CD8-positive, alpha-beta T cell (primary cell): ENCODE measurements at regions of chr5 and their contacts with region 1.

Region 1: DNA sequence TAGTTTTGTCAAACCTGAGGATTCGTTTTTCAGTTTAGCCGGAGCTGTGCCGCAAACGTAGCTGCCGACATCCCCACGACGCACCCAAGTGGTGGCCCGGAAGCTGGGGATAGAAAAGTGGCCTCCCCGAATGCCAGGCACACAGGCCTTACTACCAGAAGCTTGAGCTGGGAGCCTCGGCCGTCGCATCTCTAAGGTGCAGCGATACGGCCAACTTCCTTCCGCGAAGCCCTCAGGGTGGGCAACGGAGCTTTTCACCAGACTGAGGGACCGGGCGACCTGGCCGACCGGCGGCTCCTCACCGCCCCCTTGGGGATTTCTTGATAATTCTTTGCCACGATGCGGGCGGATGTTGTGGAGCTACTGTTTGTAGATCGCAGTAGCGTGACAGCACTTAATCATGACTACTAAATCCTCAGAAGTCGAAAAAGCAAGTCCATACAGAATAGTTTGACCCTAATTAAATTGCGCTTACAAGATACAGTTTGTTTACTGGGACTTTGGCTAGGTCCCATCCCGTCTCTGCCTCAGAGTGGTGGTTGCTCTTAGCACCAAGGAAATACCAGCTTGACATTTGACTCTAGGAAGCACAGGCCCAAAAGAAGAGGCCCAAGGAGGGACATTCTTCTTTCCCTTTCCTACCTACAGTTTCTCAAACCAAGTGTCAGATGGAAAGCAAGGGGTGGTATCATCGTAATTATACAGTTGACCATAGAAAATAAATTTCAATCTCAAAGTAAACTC is 613 bp upstream of the TMEM267 start:
- DNase-seq: peak; percentile 72 to 92 (median 86)
- ATAC-seq: peak; percentile 67
- H3K4me3 ChIP-seq: peak overlapping the region; percentile 76 to 97
- H3K4me3 Mint-ChIP-seq: peak overlapping the region; percentile 98
- H3K27ac ChIP-seq: peak overlapping the region; percentile 96 to 99
- H3K27ac Mint-ChIP-seq: peak overlapping the region; percentile 100
- H3K4me1 ChIP-seq: peaks cover 30% of the 10 kb centered on the region
- H3K4me1 Mint-ChIP-seq: peaks cover 53% of the 10 kb centered on the region
- H3K27me3 ChIP-seq: no peaks in the 10 kb centered on the region
- H3K27me3 Mint-ChIP-seq: no peaks in the 10 kb centered on the region
- CTCF ChIP-seq: peak; percentile 73

Region 2: GRCh38 chr5:42908509-42909488 is 575.5 kb before region 1 on chr5:
- CTCF ChIA-PET with region 1: interaction called, 7 read pairs
- POLR2A ChIA-PET with region 1: interaction called, 19 read pairs
- intact Hi-C with region 1: loop called (anchors 2 to 5 kb)
- DNase-seq: peak; percentile 78 to 96 (median 90)
- ATAC-seq: peak; percentile 91
- H3K4me3 ChIP-seq: peak overlapping the region; percentile 65 to 71
- H3K4me3 Mint-ChIP-seq: peak overlapping the region; percentile 93
- H3K27ac ChIP-seq: peak overlapping the region; percentile 57 to 60
- H3K27ac Mint-ChIP-seq: peak overlapping the region; percentile 95
- H3K4me1 ChIP-seq: peaks cover 9% of the 10 kb centered on the region
- H3K4me1 Mint-ChIP-seq: peaks cover 14% of the 10 kb centered on the region
- H3K27me3 ChIP-seq: no peaks in the 10 kb centered on the region
- H3K27me3 Mint-ChIP-seq: peaks cover 2% of the 10 kb centered on the region
- CTCF ChIP-seq: peak; percentile 86

Region 3: GRCh38 chr5:43019614-43020293 is 464.5 kb before region 1 on chr5:
- CTCF ChIA-PET with region 1: interaction called, 5 read pairs
- POLR2A ChIA-PET with region 1: interaction called, 33 read pairs
- intact Hi-C with region 1: no loop called
- DNase-seq: peak; percentile 69 to 96 (median 84)
- ATAC-seq: peak; percentile 66
- H3K4me3 ChIP-seq: peak overlapping the region; percentile 70 to 73
- H3K4me3 Mint-ChIP-seq: peak overlapping the region; percentile 98
- H3K27ac ChIP-seq: peak overlapping the region; percentile 97 to 98
- H3K27ac Mint-ChIP-seq: peak overlapping the region; percentile 100
- H3K4me1 ChIP-seq: peaks cover 40% of the 10 kb centered on the region
- H3K4me1 Mint-ChIP-seq: peaks cover 43% of the 10 kb centered on the region
- H3K27me3 ChIP-seq: no peaks in the 10 kb centered on the region
- H3K27me3 Mint-ChIP-seq: no peaks in the 10 kb centered on the region
- CTCF ChIP-seq: peak; percentile 71

Region 4: DNA sequence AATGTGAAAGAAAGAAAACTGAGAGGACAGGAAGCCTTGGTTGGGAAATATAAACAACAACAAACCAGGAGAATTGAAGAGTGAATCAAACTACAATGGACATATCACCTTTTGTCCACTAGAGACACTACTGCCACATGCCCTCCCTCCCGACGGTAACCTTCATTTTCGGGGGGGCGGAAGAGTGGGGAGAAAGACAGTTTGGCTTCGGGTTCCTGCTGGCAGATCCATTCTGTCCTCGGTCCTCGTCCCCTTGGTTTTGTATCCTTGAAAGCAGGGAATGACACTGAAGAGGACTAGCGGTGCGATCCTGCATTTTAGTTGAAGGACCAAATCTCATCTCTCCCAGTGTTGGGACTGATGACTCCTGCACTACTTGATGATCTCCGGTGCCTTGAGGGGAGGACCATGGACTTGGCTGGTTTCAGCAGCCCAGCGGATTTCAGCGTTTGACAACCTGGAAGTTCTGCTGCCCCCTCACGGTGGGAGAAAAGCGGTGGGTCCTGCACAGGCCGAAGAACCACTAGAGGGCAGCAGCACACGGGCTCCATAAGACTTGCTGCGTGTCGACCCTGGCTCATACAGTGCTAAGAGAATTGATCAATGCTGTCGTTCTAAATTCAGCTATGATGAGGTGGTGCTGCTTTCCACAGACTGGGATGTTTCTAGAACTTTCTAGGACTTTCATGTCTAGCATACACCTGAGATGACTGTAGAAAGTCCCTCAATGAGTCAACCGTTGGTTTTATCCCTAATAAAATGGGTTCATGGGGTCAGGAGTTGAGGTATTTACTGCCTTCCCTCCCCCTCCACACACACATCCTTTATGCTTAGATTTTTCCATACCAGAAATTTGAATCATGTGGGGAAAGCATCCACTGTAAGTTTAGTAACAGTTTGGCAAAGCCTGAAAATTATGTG is 378.6 kb before region 1 on chr5:
- CTCF ChIA-PET with region 1: no interaction called
- POLR2A ChIA-PET with region 1: interaction called, 6 read pairs
- intact Hi-C with region 1: loop called in 1 of 2 experiments (anchors 1 kb)
- DNase-seq: peak; percentile 81 to 96 (median 91)
- ATAC-seq: peak; percentile 94
- H3K4me3 ChIP-seq: peak overlapping the region; percentile 55 to 56
- H3K4me3 Mint-ChIP-seq: peak overlapping the region; percentile 84
- H3K27ac ChIP-seq: peak overlapping the region in 1 of 2 experiments; percentile 58
- H3K27ac Mint-ChIP-seq: peak overlapping the region; percentile 84
- H3K4me1 ChIP-seq: peaks cover 27% of the 10 kb centered on the region
- H3K4me1 Mint-ChIP-seq: peaks cover 35% of the 10 kb centered on the region
- H3K27me3 ChIP-seq: no peaks in the 10 kb centered on the region
- H3K27me3 Mint-ChIP-seq: no peaks in the 10 kb centered on the region
- CTCF ChIP-seq: peak; percentile 100

Region 5: DNA sequence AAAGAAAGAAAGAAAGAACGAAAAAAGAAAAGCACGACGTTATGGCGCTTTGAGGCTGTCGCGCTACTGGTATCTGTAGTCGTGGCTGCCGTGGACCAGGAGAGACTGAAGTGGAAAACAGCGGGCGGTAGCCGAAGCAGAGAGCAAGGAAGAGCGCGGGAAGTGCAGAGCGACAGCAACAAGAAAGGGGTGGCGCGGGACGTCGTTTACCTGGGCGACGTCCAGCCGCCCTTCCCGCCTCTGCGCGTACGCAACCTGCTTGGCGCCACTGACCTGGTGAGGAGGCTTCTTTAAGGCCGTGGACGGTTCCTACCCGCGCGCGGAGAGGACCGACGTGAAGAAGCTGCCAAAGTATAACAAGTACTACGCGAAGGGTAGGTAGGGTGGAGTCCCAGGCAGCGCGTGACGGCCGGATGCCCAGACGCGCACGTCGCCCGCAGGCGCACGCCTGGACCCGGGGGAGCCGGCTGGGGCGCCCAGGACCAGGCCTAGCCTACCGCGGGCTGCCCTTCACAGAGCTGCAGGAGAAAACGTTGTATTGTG is 87.4 kb before region 1 on chr5:
- CTCF ChIA-PET with region 1: interaction called, 8 read pairs
- POLR2A ChIA-PET with region 1: interaction called, 29 read pairs
- intact Hi-C with region 1: loop called (anchors 1 to 5 kb)
- DNase-seq: peak; percentile 40 to 80 (median 60)
- ATAC-seq: peak; percentile 93
- H3K4me3 ChIP-seq: peak overlapping the region; percentile 66 to 86
- H3K4me3 Mint-ChIP-seq: peak overlapping the region; percentile 94
- H3K27ac ChIP-seq: peak overlapping the region; percentile 77 to 78
- H3K27ac Mint-ChIP-seq: peak overlapping the region; percentile 96
- H3K4me1 ChIP-seq: peaks cover 18% of the 10 kb centered on the region
- H3K4me1 Mint-ChIP-seq: peaks cover 39% of the 10 kb centered on the region
- H3K27me3 ChIP-seq: no peaks in the 10 kb centered on the region
- H3K27me3 Mint-ChIP-seq: no peaks in the 10 kb centered on the region
- CTCF ChIP-seq: no peak

Region 6: GRCh38 chr5:43523662-43524072 is 39.4 kb after region 1 on chr5:
- CTCF ChIA-PET with region 1: no interaction called
- POLR2A ChIA-PET with region 1: interaction called, 16 read pairs
- intact Hi-C with region 1: no loop called
- DNase-seq: no peak
- ATAC-seq: no peak
- H3K4me3 ChIP-seq: no peak overlapping the region
- H3K4me3 Mint-ChIP-seq: no peak overlapping the region
- H3K27ac ChIP-seq: no peak overlapping the region
- H3K27ac Mint-ChIP-seq: no peak overlapping the region
- H3K4me1 ChIP-seq: no peaks in the 10 kb centered on the region
- H3K4me1 Mint-ChIP-seq: no peaks in the 10 kb centered on the region
- H3K27me3 ChIP-seq: no peaks in the 10 kb centered on the region
- H3K27me3 Mint-ChIP-seq: no peaks in the 10 kb centered on the region
- CTCF ChIP-seq: no peak